MCF 10A (cell line): ENCODE measurements at regions of chr15 and their contacts with region 1.

Region 1: DNA sequence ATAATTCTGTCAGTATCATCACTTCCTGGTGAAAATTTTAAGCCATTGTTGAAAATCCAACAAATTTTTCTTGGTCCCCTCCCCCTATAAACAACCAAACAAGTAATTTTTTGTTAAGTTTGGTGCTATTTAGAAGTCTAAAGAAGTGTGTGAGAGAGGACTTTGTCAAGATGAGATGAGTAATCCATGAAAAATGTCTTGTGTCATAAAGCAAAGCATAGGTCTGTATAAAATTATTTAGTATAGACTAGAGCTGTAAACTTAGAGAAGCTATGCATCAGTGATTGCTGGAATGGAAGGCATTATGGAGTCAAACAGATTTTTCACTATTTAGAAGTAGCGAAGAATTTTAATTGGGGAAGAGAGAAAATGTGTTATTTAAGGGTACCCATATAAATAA is 31.4 kb downstream of the MAPK6 start:
- DNase-seq: peak; percentile 28
- H3K4me3 Mint-ChIP-seq: no peak overlapping the region
- H3K27ac Mint-ChIP-seq: no peak overlapping the region
- H3K4me1 Mint-ChIP-seq: peaks cover 5% of the 10 kb centered on the region
- H3K27me3 Mint-ChIP-seq: no peaks in the 10 kb centered on the region
- CTCF ChIP-seq: no peak

Region 2: DNA sequence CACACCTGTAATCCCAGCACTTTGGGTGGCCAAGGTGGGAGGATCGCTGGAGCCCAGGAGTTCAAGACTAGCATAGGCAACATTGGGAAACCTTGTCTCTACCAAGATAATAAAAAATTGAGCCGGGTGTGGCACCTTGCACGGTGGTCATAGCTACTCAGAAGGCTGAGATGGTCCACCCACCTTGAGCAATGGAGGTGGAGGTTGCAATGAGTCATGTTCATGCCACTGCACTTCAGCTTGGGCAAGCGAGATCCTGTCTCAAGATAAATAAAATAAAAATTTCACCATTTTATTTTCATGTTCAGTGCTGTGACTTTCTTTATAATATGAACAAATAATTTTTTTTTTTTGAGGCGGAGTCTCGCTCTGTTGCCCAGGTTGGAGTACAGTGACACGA is 18.9 kb before region 1 on chr15:
- CTCF ChIA-PET with region 1: interaction called, 3 read pairs
- POLR2A ChIA-PET with region 1: interaction called, 20 read pairs
- intact Hi-C with region 1: no loop called
- DNase-seq: peak; percentile 95
- H3K4me3 Mint-ChIP-seq: no peak overlapping the region
- H3K27ac Mint-ChIP-seq: peak overlapping the region; percentile 31
- H3K4me1 Mint-ChIP-seq: peaks cover 16% of the 10 kb centered on the region
- H3K27me3 Mint-ChIP-seq: no peaks in the 10 kb centered on the region
- CTCF ChIP-seq: no peak

Region 3: GRCh38 chr15:52039925-52040781 is 10.3 kb before region 1 on chr15:
- CTCF ChIA-PET with region 1: interaction called, 3 read pairs
- POLR2A ChIA-PET with region 1: interaction called, 20 read pairs
- intact Hi-C with region 1: no loop called
- DNase-seq: no peak
- H3K4me3 Mint-ChIP-seq: no peak overlapping the region
- H3K27ac Mint-ChIP-seq: peak overlapping the region; percentile 77
- H3K4me1 Mint-ChIP-seq: peaks cover 41% of the 10 kb centered on the region
- H3K27me3 Mint-ChIP-seq: no peaks in the 10 kb centered on the region
- CTCF ChIP-seq: no peak

Region 4: GRCh38 chr15:52154896-52155865 is 104.8 kb after region 1 on chr15:
- CTCF ChIA-PET with region 1: no interaction called
- POLR2A ChIA-PET with region 1: no interaction called
- intact Hi-C with region 1: no loop called
- DNase-seq: no peak
- H3K4me3 Mint-ChIP-seq: no peak overlapping the region
- H3K27ac Mint-ChIP-seq: no peak overlapping the region
- H3K4me1 Mint-ChIP-seq: no peaks in the 10 kb centered on the region
- H3K27me3 Mint-ChIP-seq: no peaks in the 10 kb centered on the region
- CTCF ChIP-seq: no peak